Posterior vena cava (tissue), 2 donors: ENCODE measurements at regions of chr11 and their contacts with region 1.

Region 1: DNA sequence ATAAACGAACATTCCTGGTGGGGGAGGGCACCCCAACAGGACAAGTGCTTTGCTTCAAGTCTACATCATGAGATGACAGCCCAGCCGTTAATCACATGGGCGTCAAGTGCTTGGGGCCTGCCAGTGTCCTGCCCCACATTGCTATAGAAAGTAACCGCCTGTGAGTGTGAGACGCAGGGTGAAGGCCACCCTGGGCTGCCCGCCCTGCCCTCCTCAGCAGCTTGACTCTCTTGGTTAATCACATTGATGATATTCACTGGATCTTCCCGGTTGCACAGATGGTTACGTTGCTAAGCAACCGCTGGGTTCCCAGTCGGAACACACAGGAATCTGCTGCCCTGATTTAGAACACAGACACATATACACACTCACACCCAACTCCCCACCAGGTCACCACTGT is 79.3 kb downstream of the CTTN start:
- DNase-seq: peak; percentile 48

Region 2: GRCh38 chr11:70568038-70568813 is 90.6 kb after region 1 on chr11:
- intact Hi-C with region 1: no loop called
- DNase-seq: peak; percentile 86

Region 3: GRCh38 chr11:70761094-70761891 is 283.7 kb after region 1 on chr11:
- intact Hi-C with region 1: loop called in 1 of 2 experiments (anchors 1 kb)
- DNase-seq: peak; percentile 66